Activated CD4-positive, alpha-beta memory T cell treated with anti-CD3 and anti-CD28 coated beads, Interleukin-2, amount 10 ng/mL, durations not matched to agents 7 days and 5 days (primary cell): ENCODE measurements at regions of chr7 and their contacts with region 1.

Region 1: DNA sequence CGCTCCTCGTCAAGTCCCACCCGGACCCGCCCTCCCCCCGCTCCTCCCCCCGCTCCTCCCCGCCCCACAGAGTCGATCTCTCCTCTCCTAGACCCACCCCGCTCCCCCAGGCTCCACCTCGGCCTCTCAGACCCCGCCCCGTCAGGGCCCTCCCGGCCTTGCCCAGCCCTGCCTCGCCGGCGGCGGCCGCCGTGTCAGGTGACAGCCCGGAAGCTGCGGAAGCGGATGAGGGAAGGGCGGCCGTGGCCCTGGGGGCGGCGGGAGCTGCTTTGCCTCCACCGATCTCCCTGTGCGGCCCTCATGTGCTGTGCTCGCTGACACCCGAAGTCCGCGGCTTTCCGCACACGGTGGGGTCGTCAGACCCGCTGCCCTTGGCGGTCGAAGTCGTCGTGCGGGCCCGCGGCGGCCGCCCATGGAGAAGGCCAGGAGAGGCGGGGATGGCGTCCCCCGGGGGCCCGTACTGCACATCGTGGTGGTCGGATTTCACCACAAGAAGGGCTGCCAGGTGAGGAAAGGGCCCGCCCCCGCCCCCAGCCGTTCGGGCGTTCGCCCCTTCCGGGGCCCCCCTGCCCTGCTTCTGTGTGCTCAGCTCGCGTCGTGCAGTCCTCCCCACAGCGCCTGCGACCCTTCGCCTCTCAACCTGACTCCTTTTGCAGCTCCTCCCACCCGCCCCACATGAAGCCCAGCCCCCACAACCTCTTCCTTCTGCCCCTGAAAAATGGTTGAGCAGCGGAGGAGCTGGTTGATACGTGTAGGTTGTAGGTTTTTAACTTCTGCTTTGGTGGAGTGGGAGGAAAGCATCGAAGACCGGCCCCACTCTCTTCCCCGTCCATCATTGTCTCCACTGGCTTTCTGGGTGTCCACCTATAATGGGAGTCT is at the start of gene AVL9:
- DNase-seq: peak; percentile 99
- H3K4me3 Mint-ChIP-seq: peak within 1 kb of the TSS; percentile 88
- H3K27ac Mint-ChIP-seq: peak within 1 kb of the TSS; percentile 96
- H3K4me1 Mint-ChIP-seq: peaks cover 45% of the 10 kb centered on the region
- H3K27me3 Mint-ChIP-seq: no peaks in the 10 kb centered on the region
- total RNA-seq, gene AVL9: 38.7 to 40.8 TPM

Region 2: DNA sequence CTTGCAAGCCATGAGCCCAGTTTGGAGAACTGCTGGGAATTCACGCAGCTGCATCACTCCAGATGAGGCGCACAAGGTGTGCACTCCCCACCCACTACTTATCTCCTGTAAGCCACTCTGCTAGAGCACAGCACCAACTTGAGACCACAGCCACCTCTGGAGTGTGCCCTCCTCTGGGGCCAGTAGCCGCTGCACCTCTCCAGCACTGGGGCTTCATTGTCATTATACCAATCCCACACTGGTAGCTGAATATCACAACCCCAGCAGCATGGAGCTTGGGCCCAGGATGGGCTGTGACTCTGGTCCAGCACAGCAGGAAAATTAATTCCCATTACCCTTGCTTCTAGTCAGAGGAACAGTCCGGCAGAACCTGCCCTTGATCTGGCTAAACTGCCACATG is 131.0 kb before region 1 on chr7:
- CTCF ChIA-PET with region 1: no interaction called
- POLR2A ChIA-PET with region 1: no interaction called
- DNase-seq: no peak
- H3K4me3 Mint-ChIP-seq: no peak overlapping the region
- H3K27ac Mint-ChIP-seq: no peak overlapping the region
- H3K4me1 Mint-ChIP-seq: no peaks in the 10 kb centered on the region
- H3K27me3 Mint-ChIP-seq: no peaks in the 10 kb centered on the region

Region 3: GRCh38 chr7:32470871-32471270 is 24.7 kb before region 1 on chr7:
- CTCF ChIA-PET with region 1: no interaction called
- POLR2A ChIA-PET with region 1: no interaction called
- DNase-seq: no peak
- H3K4me3 Mint-ChIP-seq: no peak overlapping the region
- H3K27ac Mint-ChIP-seq: no peak overlapping the region
- H3K4me1 Mint-ChIP-seq: no peaks in the 10 kb centered on the region
- H3K27me3 Mint-ChIP-seq: no peaks in the 10 kb centered on the region

Region 4: GRCh38 chr7:32506266-32507054 is 10.9 kb after region 1 on chr7:
- CTCF ChIA-PET with region 1: interaction called, 4 read pairs
- POLR2A ChIA-PET with region 1: interaction called, 11 read pairs
- DNase-seq: no peak
- H3K4me3 Mint-ChIP-seq: no peak overlapping the region
- H3K27ac Mint-ChIP-seq: peak overlapping the region; percentile 47
- H3K4me1 Mint-ChIP-seq: peaks cover 28% of the 10 kb centered on the region
- H3K27me3 Mint-ChIP-seq: no peaks in the 10 kb centered on the region